ENCODE measurements at regions of chr16 and their contacts with region 1.

Region 1: DNA sequence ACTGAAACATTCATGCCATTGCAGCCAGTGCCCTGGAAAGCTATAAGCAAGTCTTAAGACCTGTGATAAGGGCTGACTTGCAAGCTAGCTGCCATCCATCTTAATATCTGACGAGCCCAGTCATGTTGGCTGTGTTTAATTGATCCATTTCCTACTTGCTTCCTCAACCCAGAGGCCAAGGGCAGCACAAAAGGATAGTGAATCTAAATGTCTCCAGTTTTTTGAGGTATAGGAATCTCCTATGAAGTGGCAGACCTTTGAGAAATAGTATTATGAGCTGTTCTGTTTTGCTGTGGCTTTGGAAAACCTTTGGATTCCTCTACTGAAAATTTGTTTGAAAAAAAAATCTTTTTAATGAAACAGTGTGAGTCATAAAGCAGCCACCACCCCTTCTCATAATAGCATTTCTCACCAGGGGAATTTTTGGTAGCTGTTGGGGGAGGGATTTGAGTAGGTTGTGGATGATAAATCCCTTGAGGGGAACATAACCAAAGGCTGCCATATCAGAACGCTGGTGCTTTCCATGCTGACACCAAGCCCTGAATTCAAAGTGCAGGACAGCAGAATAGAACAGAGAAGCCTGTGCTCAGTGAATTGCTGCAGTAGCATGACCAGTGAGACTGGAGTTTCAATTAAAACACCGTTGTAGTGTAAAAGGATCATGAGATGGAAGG is 12.9 kb downstream of the ZNRF1 start:
- DNase-seq: peak; percentile 63 to 92 (median 92)
- H3K4me3 ChIP-seq: peak overlapping the region in 3 of 7 experiments; percentile 6 to 17 (median 11)
- H3K27ac ChIP-seq: peak overlapping the region; percentile 46 to 71
- H3K4me1 ChIP-seq: peaks cover 16 to 49% (median 40%) of the 10 kb centered on the region in 4 experiments
- H3K27me3 ChIP-seq: no peaks in the 10 kb centered on the region

Region 2: GRCh38 chr16:74888208-74888852 is 123.4 kb before region 1 on chr16:
- CTCF ChIA-PET with region 1: no interaction called
- POLR2A ChIA-PET with region 1: no interaction called
- DNase-seq: no peak
- H3K4me3 ChIP-seq: no peak overlapping the region
- H3K27ac ChIP-seq: no peak overlapping the region
- H3K4me1 ChIP-seq: no peaks in the 10 kb centered on the region
- H3K27me3 ChIP-seq: no peaks in the 10 kb centered on the region

Region 3: DNA sequence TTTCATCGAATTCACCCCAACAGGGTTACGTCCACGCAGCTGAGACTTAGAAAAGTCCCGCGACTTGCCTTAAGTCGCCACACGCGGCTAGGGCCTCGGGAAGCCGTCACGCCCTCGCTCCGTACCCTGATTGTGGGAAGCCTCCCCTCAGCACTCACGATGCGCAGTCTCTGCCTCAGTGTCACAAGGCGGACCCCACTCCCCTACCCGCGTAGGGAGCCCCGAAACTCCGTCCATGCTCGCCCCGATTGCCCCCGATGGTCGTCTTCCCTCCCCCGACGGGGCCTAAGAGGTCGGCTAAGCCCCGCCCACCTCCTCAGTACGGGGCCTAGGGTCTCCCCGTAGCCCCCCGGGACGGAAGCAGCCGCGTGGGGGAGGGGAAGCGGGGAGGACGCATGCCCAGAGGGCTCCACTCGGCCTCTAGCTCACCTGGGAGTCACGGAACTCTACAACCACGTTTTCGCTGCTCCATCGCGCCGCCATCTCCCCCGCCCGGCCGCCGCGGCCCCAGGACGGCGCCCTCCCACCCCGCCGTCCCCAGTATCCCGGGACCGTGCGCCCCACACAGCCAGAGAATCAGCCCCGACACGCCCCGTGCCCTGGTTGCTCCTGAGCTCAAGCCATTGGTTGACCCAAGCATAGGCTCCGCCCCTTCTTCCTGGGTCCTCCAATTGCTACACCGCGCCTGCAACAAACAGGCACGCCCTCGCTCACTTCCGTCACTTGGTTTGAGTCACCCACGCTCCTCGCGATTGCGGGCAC is 27.1 kb before region 1 on chr16 and contains the start of gene WDR59:
- CTCF ChIA-PET with region 1: no interaction called
- POLR2A ChIA-PET with region 1: no interaction called
- DNase-seq: peak; percentile 100
- H3K4me3 ChIP-seq: peak within 1 kb of the TSS; percentile 74 to 98 (median 95)
- H3K27ac ChIP-seq: peak within 1 kb of the TSS; percentile 33 to 81
- H3K4me1 ChIP-seq: peaks cover 0 to 17% (median 9%) of the 10 kb centered on the region in 4 experiments
- H3K27me3 ChIP-seq: no peaks in the 10 kb centered on the region

Region 4: DNA sequence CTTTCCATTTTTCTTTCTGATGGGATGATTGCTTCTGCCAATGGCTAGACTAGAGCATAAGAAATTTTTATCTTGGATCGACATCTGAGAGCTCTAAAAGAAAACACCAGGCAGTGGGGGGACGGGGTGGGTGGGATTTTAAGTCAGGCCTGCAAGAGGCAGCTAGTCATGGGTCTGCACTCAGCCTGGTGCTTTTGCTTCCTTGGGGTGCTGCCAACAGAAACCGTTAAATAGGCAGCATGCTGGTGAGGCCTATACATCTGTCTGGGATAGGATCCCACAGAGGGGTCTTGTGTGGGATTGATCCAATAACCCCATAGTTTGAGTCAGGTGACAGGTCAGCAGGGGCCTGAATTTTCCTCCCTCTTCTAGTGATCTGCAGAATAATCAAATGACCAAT is 14.0 kb after region 1 on chr16:
- CTCF ChIA-PET with region 1: interaction called, 20 read pairs
- POLR2A ChIA-PET with region 1: interaction called, 3 read pairs
- DNase-seq: peak in 2 of 3 donors; percentile 46 to 61
- H3K4me3 ChIP-seq: no peak overlapping the region
- H3K27ac ChIP-seq: peak overlapping the region in 1 of 2 experiments; percentile 39
- H3K4me1 ChIP-seq: peaks cover 13 to 42% (median 33%) of the 10 kb centered on the region in 4 experiments
- H3K27me3 ChIP-seq: no peaks in the 10 kb centered on the region

Measured in common myeloid progenitor, CD34-positive (primary cell).